ENCODE measurements at regions of chr11 and their contacts with region 1.

Region 1: DNA sequence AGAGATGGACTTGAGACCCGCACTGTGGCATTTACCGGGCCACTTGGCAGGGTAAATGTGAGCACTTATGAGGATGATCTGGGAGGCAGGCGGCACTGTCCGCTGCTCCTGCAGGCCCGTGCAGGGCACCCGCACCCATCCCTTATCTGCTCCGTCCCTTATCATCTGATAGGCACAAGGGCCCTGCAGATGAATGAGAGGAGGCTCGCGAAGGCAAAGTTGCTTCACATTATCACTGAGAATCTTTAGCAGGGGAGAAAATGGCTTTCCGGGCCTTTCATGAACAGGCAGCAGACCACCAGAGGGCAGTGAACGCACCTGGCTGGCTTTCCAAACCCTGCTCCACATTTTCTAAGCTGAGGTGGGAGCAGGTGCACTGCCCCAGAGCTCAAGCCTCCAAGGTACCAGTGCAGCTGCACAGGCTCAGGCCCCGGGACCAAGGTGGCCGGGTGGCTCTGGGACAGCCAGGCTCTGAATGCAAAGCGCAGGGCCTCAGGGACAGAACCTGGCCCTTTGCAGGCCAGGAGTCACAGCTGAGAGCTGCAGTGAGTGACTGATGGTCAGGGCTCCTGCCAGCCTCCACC is 165.6 kb downstream of the SHANK2 start:
- DNase-seq: peak; percentile 73
- H3K4me3 ChIP-seq: no peak overlapping the region
- H3K27ac ChIP-seq: no peak overlapping the region
- H3K4me1 ChIP-seq: peaks cover 0 to 2% of the 10 kb centered on the region in 2 experiments; a peak in 1 of 4 replicates
- H3K27me3 ChIP-seq: no peaks in the 10 kb centered on the region
- CTCF ChIP-seq: 0 out of 2 replicates have a peak, but pooled peaks have one; percentile 9
- EP300 ChIP-seq: no peak
- RAD21 ChIP-seq: peak; percentile 66

Region 2: GRCh38 chr11:71279916-71280645 is 193.3 kb after region 1 on chr11:
- CTCF ChIA-PET with region 1: no interaction called
- POLR2A ChIA-PET with region 1: no interaction called
- DNase-seq: no peak
- H3K4me3 ChIP-seq: no peak overlapping the region
- H3K27ac ChIP-seq: no peak overlapping the region
- H3K4me1 ChIP-seq: peaks cover 0 to 8% of the 10 kb centered on the region in 2 experiments; a peak in 1 of 4 replicates
- H3K27me3 ChIP-seq: no peaks in the 10 kb centered on the region
- CTCF ChIP-seq: no peak
- EP300 ChIP-seq: no peak
- RAD21 ChIP-seq: no peak

Region 3: GRCh38 chr11:71342951-71343827 is 256.4 kb after region 1 on chr11:
- CTCF ChIA-PET with region 1: interaction called, 10 read pairs
- POLR2A ChIA-PET with region 1: no interaction called
- DNase-seq: peak; percentile 74
- H3K4me3 ChIP-seq: no peak overlapping the region
- H3K27ac ChIP-seq: no peak overlapping the region
- H3K4me1 ChIP-seq: no peaks in the 10 kb centered on the region; a peak in 1 of 4 replicates
- H3K27me3 ChIP-seq: no peaks in the 10 kb centered on the region
- CTCF ChIP-seq: no peak
- EP300 ChIP-seq: no peak
- RAD21 ChIP-seq: peak; percentile 46

Region 4: GRCh38 chr11:71420455-71421241 is 333.9 kb after region 1 on chr11:
- CTCF ChIA-PET with region 1: interaction called, 13 read pairs
- POLR2A ChIA-PET with region 1: no interaction called
- DNase-seq: peak; percentile 63
- H3K4me3 ChIP-seq: no peak overlapping the region; a peak in 1 of 4 replicates
- H3K27ac ChIP-seq: no peak overlapping the region
- H3K4me1 ChIP-seq: no peaks in the 10 kb centered on the region
- H3K27me3 ChIP-seq: no peaks in the 10 kb centered on the region
- CTCF ChIP-seq: peak; percentile 52
- EP300 ChIP-seq: no peak
- RAD21 ChIP-seq: peak; percentile 71

Measured in SK-N-SH (cell line).